ENCODE measurements at regions of chr12 and their contacts with region 1.

Region 1: GRCh38 chr12:72406111-72406510 is 133.9 kb downstream of the TRHDE start:
- DNase-seq: no peak
- H3K4me3 ChIP-seq: no peak overlapping the region
- H3K27ac ChIP-seq: no peak overlapping the region
- H3K4me1 ChIP-seq: no peaks in the 10 kb centered on the region
- H3K27me3 ChIP-seq: no peaks in the 10 kb centered on the region
- CTCF ChIP-seq: no peak

Region 2: GRCh38 chr12:70560671-70561070 is 1845.4 kb before region 1 on chr12:
- CTCF ChIA-PET with region 1: no interaction called
- POLR2A ChIA-PET with region 1: no interaction called
- intact Hi-C with region 1: no loop called
- DNase-seq: no peak
- H3K4me3 ChIP-seq: no peak overlapping the region
- H3K27ac ChIP-seq: no peak overlapping the region
- H3K4me1 ChIP-seq: 0 out of 2 replicates have a peak, but pooled peaks cover 4% of the 10 kb centered on the region
- H3K27me3 ChIP-seq: no peaks in the 10 kb centered on the region
- CTCF ChIP-seq: no peak

Region 3: DNA sequence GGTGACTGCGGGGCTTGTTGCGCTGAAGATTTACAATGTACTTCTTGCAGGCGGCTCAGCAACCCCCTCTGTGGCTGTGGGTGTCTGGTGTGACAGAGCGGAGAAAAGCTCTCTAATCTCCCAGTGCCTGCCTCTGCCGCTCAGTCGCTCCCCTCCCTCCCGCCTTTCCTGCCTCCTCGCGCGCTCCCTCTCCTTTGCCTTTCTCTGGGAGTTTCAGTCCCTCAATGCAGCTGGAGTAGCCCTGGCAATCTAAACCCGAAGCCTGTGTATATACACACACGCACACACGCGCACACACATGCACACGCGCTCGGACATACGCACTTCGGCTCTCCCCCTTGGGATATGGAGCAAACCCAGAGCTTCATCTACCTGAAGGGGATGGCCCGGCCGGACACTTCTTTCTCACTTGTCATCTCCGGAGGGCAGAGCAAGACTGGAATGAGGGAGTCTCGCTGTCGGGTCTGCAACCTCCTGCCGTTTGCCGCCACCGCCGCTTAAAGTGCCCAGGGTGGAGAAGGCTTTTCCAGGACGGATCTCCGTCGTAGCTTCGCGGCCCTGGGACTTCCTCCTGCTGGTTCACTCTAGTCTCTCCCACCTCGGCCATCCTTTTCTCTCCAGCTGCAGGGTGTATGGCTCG is 134.5 kb before region 1 on chr12:
- CTCF ChIA-PET with region 1: interaction called, 11 read pairs
- POLR2A ChIA-PET with region 1: no interaction called
- intact Hi-C with region 1: no loop called
- DNase-seq: peak in 1 of 2 experiments; percentile 24
- H3K4me3 ChIP-seq: no peak overlapping the region
- H3K27ac ChIP-seq: no peak overlapping the region
- H3K4me1 ChIP-seq: no peaks in the 10 kb centered on the region
- H3K27me3 ChIP-seq: no peaks in the 10 kb centered on the region
- CTCF ChIP-seq: no peak

Region 4: DNA sequence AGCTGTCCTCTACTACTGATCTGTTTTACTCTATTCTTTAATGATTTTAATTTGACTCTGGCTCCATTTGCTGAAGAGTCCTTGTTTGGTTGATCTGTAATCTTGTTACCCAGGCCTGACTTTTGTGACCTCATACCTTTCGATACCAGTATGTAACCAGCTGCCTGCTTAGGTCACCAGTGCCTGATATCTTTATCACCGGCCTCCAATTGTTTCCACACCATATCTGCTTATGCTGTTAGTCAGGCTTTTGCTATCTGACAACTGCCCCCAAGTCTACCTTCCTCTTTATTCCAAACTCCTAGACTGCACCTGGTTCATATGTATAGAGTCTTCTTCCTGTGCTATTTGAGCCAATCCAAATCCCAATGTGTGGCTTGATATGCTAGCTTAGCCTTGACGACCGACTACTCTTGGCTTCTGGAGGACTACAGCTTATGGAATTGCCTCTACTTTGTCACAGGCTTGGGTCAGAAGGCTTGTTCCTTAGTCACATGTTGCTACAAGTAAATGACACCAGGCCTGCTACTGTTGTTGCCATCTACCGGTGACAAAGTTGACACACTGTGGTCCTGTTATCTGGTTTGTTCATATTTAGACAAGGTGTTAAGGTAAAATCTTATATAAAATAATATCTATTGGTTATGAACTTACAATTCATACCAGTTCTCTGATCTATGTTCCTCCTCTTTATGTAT is 60.0 kb after region 1 on chr12:
- CTCF ChIA-PET with region 1: no interaction called
- POLR2A ChIA-PET with region 1: no interaction called
- intact Hi-C with region 1: no loop called
- DNase-seq: no peak
- H3K4me3 ChIP-seq: no peak overlapping the region
- H3K27ac ChIP-seq: no peak overlapping the region
- H3K4me1 ChIP-seq: no peaks in the 10 kb centered on the region
- H3K27me3 ChIP-seq: no peaks in the 10 kb centered on the region
- CTCF ChIP-seq: no peak

Region 5: DNA sequence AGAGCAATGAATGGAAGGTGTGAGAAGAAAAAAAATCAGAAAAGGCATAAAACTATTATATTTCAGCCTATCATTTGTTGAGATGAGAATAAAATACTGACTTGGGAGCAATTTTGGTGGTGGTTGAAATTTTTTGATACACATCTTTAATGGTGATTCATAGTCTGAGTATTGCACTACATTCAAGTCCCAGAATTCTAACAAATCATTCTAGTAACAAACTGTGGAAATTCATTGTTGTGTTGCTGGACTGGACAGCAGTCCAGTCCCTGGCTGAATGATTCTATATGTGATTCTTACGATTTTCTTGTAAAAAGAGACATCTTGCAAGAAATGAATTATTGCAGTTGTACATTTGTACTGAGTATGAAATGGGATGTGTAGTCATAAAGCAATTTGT is 134.7 kb after region 1 on chr12:
- CTCF ChIA-PET with region 1: no interaction called
- POLR2A ChIA-PET with region 1: no interaction called
- intact Hi-C with region 1: no loop called
- DNase-seq: no peak
- H3K4me3 ChIP-seq: no peak overlapping the region
- H3K27ac ChIP-seq: no peak overlapping the region
- H3K4me1 ChIP-seq: no peaks in the 10 kb centered on the region
- H3K27me3 ChIP-seq: no peaks in the 10 kb centered on the region
- CTCF ChIP-seq: no peak